ENCODE measurements at regions of chr3 and their contacts with region 1.

Region 1: DNA sequence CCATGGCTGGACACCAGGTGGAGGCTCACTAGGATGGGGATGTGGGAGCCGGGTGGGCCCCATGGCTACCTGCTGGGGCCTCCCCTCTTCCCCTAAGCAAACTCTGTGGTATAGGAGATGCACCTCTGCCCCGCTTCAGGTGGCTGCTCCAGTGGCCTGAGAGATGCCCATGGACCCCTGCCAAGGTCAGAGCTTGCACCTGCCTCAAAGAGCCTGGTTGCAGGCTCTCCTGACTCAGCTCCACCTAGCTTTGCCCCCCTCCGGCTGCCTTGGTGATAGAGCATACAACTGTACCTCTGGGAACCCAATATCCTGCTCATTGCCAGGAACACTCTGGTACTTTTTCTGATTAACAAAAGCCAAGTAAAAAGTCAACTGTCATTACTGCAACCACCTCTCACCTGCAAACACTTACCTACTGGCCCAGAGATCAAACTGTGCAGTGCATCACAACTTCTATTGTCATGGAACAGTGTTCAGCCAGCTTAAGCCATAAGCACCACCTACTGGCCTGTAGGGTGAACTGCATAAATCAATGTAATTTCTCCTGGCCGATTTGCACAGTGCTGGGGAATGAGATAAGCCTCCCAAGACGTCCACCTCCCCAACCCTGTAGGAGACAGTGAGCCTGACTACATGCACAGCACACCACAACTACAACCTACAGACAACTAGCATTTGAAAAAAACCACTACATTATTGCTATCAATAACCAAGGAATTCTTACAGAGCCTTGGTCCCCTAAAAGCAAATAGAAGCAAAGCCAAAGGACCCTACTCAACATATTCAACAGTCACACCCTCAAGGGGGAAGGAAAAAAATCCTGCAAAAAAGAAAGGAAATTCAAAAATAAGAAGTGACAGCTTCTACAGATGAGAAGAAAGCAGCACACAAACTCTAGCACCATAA is 352.4 kb upstream of the ARHGEF26 start:
- DNase-seq: peak; percentile 65
- ATAC-seq: peak; percentile 65

Region 2: GRCh38 chr3:153026026-153026425 is 742.8 kb before region 1 on chr3:
- intact Hi-C with region 1: loop called (anchors 5 kb)
- DNase-seq: no peak
- ATAC-seq: no peak

Region 3: GRCh38 chr3:153848702-153849101 is 79.9 kb after region 1 on chr3:
- intact Hi-C with region 1: no loop called
- DNase-seq: peak; percentile 34
- ATAC-seq: no peak

Measured in Right ventricle myocardium inferior (tissue), 1 donor.